Heart left ventricle (tissue), 16 donors: ENCODE measurements at regions of chr10 and their contacts with region 1.

Region 1: DNA sequence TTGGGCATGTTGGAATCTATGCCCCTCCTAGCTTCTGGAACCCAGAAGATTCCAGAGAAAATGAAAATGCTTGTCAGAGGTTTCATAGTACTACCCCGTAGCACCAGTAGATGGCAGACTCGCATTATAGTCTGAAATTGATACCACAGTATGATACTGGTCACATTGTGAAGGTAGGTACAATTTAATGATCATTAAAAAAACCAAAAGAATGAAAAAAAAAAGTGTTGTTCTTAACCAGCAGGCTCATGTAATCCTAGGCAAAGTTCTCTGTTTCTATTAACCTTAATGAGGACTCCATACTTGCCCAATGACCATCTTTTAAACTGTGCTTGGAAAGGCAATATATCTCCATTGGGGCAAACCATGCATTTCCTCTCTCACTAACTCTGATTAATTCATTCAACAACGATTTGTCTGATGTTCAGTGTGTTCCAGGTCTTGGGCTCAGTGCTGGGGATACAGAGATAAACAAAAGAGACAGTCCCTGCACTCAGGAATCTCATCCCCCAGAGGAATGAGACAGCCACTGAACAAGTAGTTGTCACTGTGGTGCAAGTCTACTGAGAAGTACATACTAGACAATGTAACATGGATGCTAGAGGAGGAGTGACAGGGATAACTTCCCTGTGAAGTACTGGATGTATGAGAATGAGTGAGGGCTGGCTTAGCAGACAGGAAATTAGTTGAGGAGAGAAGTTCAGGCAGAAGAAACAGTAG is 223.5 kb upstream of the PHYHIPL start:
- DNase-seq: peak in 2 of 5 donors; percentile 23 to 36
- ATAC-seq: peak; percentile 38 to 76 (median 70)
- H3K4me3 ChIP-seq: peak overlapping the region in 1 of 12 donors; percentile 11
- H3K27ac ChIP-seq: peak overlapping the region in 7 of 12 donors; percentile 32 to 88 (median 71)
- H3K4me1 ChIP-seq: peaks cover 0 to 13% (median 0%) of the 10 kb centered on the region in 12 donors
- H3K27me3 ChIP-seq: no peaks in the 10 kb centered on the region
- CTCF ChIP-seq: peak; percentile 61 to 86 (median 78)
- POLR2A ChIP-seq: no peak

Region 2: GRCh38 chr10:59181668-59182067 is 228.8 kb after region 1 on chr10:
- intact Hi-C with region 1: loop called (anchors 1 to 5 kb)
- DNase-seq: peak in 1 of 5 donors; percentile 5
- ATAC-seq: peak in 2 of 4 donors; percentile 71 to 73
- H3K4me3 ChIP-seq: no peak overlapping the region
- H3K27ac ChIP-seq: no peak overlapping the region
- H3K4me1 ChIP-seq: peaks cover 0 to 8% (median 3%) of the 10 kb centered on the region in 12 donors
- H3K27me3 ChIP-seq: peaks cover 3 to 37% (median 9%) of the 10 kb centered on the region in 9 donors
- CTCF ChIP-seq: peak; percentile 20 to 72 (median 54)
- POLR2A ChIP-seq: no peak

Region 3: DNA sequence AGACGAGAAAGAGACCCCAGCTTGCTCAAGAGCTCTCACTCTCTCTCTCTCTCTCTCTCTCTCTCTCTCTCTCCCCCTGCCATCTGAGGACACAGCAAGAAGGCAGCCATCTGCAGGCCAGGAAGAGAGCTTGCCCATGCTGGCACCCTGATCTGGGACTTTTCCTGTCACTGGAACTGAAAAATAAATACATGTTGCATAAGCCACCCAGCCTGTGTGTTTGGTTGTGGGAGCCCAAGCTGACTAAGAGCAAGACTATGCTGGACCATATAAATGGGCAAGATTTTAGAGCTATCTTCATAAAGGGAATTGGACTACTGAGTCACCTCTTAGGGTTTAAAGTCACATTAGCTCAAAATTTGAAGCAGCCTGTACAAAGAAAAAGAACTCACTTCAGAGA is 658.1 kb after region 1 on chr10:
- intact Hi-C with region 1: loop called in 1 of 10 experiments (anchors 10 kb)
- DNase-seq: no peak
- ATAC-seq: no peak
- H3K4me3 ChIP-seq: no peak overlapping the region
- H3K27ac ChIP-seq: no peak overlapping the region
- H3K4me1 ChIP-seq: no peaks in the 10 kb centered on the region
- H3K27me3 ChIP-seq: no peaks in the 10 kb centered on the region
- CTCF ChIP-seq: no peak
- POLR2A ChIP-seq: no peak